HEK293 (cell line): ENCODE measurements at regions of chr5 and their contacts with region 1.

Region 1: DNA sequence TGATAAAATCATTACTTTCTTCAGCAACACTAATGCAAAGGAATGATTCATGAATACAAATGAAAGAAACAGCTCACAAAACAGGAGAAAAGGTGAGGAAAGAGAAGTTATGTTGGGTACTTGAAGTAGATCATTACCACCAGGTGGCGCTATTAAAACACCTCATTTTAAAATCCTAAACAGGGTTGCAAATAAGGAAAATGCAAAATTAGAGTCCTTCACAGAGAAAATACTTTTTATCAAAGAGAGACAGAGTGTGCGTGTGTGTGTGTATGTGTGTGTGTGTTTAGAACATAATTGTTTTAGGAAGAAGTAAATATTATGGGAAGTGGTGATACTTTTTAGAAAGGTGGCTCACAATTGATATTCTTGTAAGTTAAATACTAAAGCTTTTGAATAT is 49.5 kb upstream of the CD180 start:
- H3K4me3 ChIP-seq: no peak overlapping the region
- H3K27ac ChIP-seq: no peak overlapping the region
- H3K4me1 ChIP-seq: peaks cover 7% of the 10 kb centered on the region; the same call in 1 of the 2 replicates
- CTCF ChIP-seq: peak; percentile 70; the same call in 1 of the 2 replicates

Region 2: GRCh38 chr5:67165526-67166459 is 80.3 kb before region 1 on chr5:
- CTCF ChIA-PET with region 1: no interaction called
- POLR2A ChIA-PET with region 1: no interaction called
- H3K4me3 ChIP-seq: no peak overlapping the region
- H3K27ac ChIP-seq: no peak overlapping the region
- H3K4me1 ChIP-seq: no peaks in the 10 kb centered on the region
- CTCF ChIP-seq: no peak

Region 3: GRCh38 chr5:67233728-67234127 is 12.4 kb before region 1 on chr5:
- CTCF ChIA-PET with region 1: interaction called, 12 read pairs
- POLR2A ChIA-PET with region 1: no interaction called
- H3K4me3 ChIP-seq: no peak overlapping the region
- H3K27ac ChIP-seq: no peak overlapping the region
- H3K4me1 ChIP-seq: no peaks in the 10 kb centered on the region
- CTCF ChIP-seq: no peak

Region 4: GRCh38 chr5:67543720-67544270 is 297.7 kb after region 1 on chr5:
- CTCF ChIA-PET with region 1: no interaction called
- POLR2A ChIA-PET with region 1: no interaction called
- H3K4me3 ChIP-seq: no peak overlapping the region
- H3K27ac ChIP-seq: no peak overlapping the region
- H3K4me1 ChIP-seq: no peaks in the 10 kb centered on the region
- CTCF ChIP-seq: no peak

Region 5: DNA sequence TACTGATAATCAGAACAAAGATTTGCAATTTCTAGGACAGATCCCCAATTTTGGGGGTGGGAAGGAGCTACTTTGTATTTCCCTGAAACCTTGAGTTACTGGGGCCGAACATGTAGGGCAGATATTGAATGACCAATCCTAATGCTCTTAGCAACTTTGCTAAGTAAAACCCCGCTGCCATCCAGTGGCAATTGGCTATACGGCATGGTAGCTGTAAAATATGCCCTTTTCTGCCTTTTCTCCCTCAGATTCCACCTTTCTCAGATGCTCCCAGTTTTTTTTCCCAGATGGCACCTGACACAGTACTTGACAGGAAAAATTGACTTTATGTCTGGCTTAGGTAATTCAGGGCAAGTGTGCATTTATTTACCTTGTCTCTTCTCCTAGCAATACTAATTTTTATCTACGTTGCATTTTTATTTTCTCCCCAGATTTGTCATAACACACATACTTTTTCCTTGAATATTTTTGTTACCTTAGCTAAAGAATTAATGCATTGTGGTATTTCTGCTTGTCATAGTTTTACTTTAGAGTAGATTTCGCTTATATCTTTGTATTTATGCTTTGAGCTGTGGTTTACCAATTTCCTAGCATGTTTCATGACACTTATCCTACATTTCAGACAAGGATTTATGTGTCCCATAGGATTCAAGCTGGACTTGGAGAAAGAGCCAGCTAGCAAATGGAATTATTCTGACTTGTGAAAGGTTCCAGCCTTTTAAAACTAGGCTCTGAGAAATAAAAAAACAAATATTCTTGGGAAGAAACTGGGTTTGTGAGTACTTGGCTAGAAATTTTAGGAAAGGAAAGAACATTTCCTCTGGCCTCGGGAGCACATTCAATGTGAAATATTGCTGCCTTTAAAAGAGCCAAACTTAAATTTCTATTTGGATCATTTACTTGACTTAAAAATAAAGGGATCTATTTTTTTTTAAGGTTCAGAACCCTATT is 1006.8 kb after region 1 on chr5:
- CTCF ChIA-PET with region 1: interaction called, 36 read pairs
- POLR2A ChIA-PET with region 1: no interaction called
- H3K4me3 ChIP-seq: no peak overlapping the region
- H3K27ac ChIP-seq: no peak overlapping the region
- H3K4me1 ChIP-seq: peaks cover 13% of the 10 kb centered on the region
- CTCF ChIP-seq: peak; percentile 87

Region 6: DNA sequence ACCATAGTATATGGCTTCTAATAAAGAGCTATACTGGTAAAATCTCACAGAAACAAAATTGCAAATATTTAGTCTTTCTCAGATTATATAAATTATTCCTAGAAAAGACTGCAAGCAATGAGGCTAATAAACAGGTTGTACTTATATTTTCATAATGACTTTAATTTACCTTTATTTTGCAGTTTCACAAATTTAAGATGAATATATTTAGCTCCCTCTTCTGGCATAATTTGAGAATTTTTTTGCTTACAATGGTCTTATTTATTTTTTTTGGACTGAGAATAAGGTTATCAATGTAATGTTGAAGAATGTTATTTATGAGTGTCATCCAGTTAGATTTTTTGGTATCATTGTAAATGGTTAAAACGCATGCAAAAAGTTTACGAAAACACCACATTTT is 1026.2 kb after region 1 on chr5:
- CTCF ChIA-PET with region 1: interaction called, 11 read pairs
- POLR2A ChIA-PET with region 1: no interaction called
- H3K4me3 ChIP-seq: no peak overlapping the region
- H3K27ac ChIP-seq: no peak overlapping the region
- H3K4me1 ChIP-seq: peaks cover 4% of the 10 kb centered on the region
- CTCF ChIP-seq: no peak